ENCODE measurements at regions of chr4 and their contacts with region 1.

Region 1: GRCh38 chr4:84966383-84967242 is at the start of gene WDFY3:
- DNase-seq: peak; percentile 85
- ATAC-seq: peak; percentile 96 to 97
- H3K4me3 ChIP-seq: peak within 1 kb of the TSS; percentile 84
- H3K27ac ChIP-seq: peak within 1 kb of the TSS; percentile 89
- H3K4me1 ChIP-seq: peaks cover 27% of the 10 kb centered on the region
- H3K27me3 ChIP-seq: no peaks in the 10 kb centered on the region
- CTCF ChIP-seq: peak; percentile 16
- total RNA-seq, gene WDFY3: 125 TPM

Region 2: GRCh38 chr4:84750253-84750959 is 216.2 kb before region 1 on chr4:
- intact Hi-C with region 1: loop called (anchors 5 kb)
- DNase-seq: no peak
- ATAC-seq: peak; percentile 74
- H3K4me3 ChIP-seq: no peak overlapping the region
- H3K27ac ChIP-seq: no peak overlapping the region
- H3K4me1 ChIP-seq: no peaks in the 10 kb centered on the region
- H3K27me3 ChIP-seq: no peaks in the 10 kb centered on the region
- CTCF ChIP-seq: peak; percentile 64

Region 3: GRCh38 chr4:85180533-85180932 is 213.9 kb after region 1 on chr4:
- intact Hi-C with region 1: no loop called
- DNase-seq: no peak
- ATAC-seq: no peak
- H3K4me3 ChIP-seq: no peak overlapping the region
- H3K27ac ChIP-seq: no peak overlapping the region
- H3K4me1 ChIP-seq: no peaks in the 10 kb centered on the region
- H3K27me3 ChIP-seq: no peaks in the 10 kb centered on the region
- CTCF ChIP-seq: no peak

Measured in lower lobe of right lung (tissue), 2 donors.